AG04450 (cell line): ENCODE measurements at regions of chr18 and their contacts with region 1.

Region 1: GRCh38 chr18:27599202-27599829 is 414.2 kb upstream of the CHST9 start:
- DNase-seq: no peak
- H3K4me3 ChIP-seq: no peak overlapping the region
- H3K27ac ChIP-seq: no peak overlapping the region
- H3K27me3 ChIP-seq: no peaks in the 10 kb centered on the region
- CTCF ChIP-seq: peak; percentile 95

Region 2: GRCh38 chr18:26307189-26307773 is 1292.0 kb before region 1 on chr18:
- CTCF ChIA-PET with region 1: interaction called, 13 read pairs
- POLR2A ChIA-PET with region 1: no interaction called
- DNase-seq: peak; percentile 15
- H3K4me3 ChIP-seq: no peak overlapping the region
- H3K27ac ChIP-seq: no peak overlapping the region
- H3K27me3 ChIP-seq: no peaks in the 10 kb centered on the region
- CTCF ChIP-seq: peak; percentile 76

Region 3: GRCh38 chr18:27400001-27400400 is 199.3 kb before region 1 on chr18:
- CTCF ChIA-PET with region 1: no interaction called
- POLR2A ChIA-PET with region 1: no interaction called
- DNase-seq: no peak
- H3K4me3 ChIP-seq: no peak overlapping the region
- H3K27ac ChIP-seq: no peak overlapping the region
- H3K27me3 ChIP-seq: no peaks in the 10 kb centered on the region
- CTCF ChIP-seq: no peak